ENCODE measurements at regions of chr4 and their contacts with region 1.

Region 1: GRCh38 chr4:88217920-88218319 is 59.5 kb upstream of the ABCG2 start:
- DNase-seq: no peak
- ATAC-seq: no peak
- H3K4me3 ChIP-seq: no peak overlapping the region
- H3K27ac ChIP-seq: no peak overlapping the region
- H3K4me1 ChIP-seq: peaks cover 0 to 3% (median 0%) of the 10 kb centered on the region in 9 donors
- H3K27me3 ChIP-seq: no peaks in the 10 kb centered on the region
- CTCF ChIP-seq: no peak

Region 2: GRCh38 chr4:88104902-88105610 is 112.9 kb before region 1 on chr4:
- intact Hi-C with region 1: no loop called
- DNase-seq: no peak
- ATAC-seq: no peak
- H3K4me3 ChIP-seq: no peak overlapping the region
- H3K27ac ChIP-seq: no peak overlapping the region
- H3K4me1 ChIP-seq: peaks cover 0 to 17% (median 8%) of the 10 kb centered on the region in 9 donors
- H3K27me3 ChIP-seq: no peaks in the 10 kb centered on the region
- CTCF ChIP-seq: no peak

Region 3: GRCh38 chr4:88240297-88240714 is 22.4 kb after region 1 on chr4:
- intact Hi-C with region 1: no loop called
- DNase-seq: peak; percentile 41 to 76
- ATAC-seq: peak; percentile 88 to 97 (median 93)
- H3K4me3 ChIP-seq: no peak overlapping the region
- H3K27ac ChIP-seq: peak overlapping the region in 6 of 10 donors; percentile 7 to 60 (median 41)
- H3K4me1 ChIP-seq: peaks cover 0 to 22% (median 5%) of the 10 kb centered on the region in 9 donors
- H3K27me3 ChIP-seq: no peaks in the 10 kb centered on the region
- CTCF ChIP-seq: peak in 3 of 9 donors; percentile 8 to 35 (median 18)

Region 4: DNA sequence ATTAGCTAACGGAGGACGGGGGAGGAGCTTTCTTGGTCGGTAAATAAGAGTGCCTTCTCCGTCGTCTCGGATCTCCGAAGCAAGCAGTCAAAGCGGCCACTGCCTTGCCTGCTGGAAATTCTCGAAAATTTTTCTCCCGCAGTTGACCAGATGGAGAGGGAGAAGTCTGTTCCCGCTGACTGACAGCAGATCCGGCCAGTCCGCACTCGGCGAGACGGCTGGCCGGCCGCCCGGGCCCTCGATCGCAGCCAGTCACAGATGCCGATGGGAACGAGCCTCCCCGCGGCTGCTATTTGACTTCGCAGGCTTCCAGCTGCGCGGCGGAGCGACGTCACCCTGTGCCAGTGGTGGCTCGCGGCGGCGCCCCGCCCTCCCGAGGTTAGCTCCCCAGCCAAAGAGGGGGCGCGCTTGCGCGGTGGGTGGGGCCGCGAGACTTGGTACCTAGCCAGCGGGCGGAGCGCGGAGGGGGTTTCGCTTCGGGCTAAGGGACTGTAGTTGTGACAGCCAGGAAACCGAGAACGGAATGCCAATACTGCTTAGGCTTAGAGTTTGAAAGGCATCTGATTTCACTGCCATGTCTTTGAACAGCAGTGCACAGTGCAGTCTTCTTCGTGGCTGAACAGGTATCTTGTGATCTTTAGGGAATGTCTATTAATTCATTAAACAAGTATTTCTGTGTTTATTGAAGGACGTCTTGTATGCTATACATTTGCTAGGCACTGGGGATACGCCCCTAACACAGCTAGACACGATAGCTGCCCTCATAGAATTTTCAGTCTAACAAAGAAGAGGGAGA is 66.7 kb after region 1 on chr4 and contains the start of gene PPM1K:
- intact Hi-C with region 1: no loop called
- DNase-seq: peak; percentile 99 to 100
- ATAC-seq: peak; percentile 96 to 98 (median 98)
- H3K4me3 ChIP-seq: peak within 1 kb of the TSS; percentile 50 to 91 (median 80)
- H3K27ac ChIP-seq: peak within 1 kb of the TSS; percentile 92 to 98 (median 96)
- H3K4me1 ChIP-seq: peaks cover 0 to 31% (median 20%) of the 10 kb centered on the region in 9 donors
- H3K27me3 ChIP-seq: no peaks in the 10 kb centered on the region
- CTCF ChIP-seq: peak in 6 of 9 donors; percentile 13 to 48 (median 24)
- total RNA-seq, gene PPM1K: 160 to 357 (median 282) TPM

Region 5: DNA sequence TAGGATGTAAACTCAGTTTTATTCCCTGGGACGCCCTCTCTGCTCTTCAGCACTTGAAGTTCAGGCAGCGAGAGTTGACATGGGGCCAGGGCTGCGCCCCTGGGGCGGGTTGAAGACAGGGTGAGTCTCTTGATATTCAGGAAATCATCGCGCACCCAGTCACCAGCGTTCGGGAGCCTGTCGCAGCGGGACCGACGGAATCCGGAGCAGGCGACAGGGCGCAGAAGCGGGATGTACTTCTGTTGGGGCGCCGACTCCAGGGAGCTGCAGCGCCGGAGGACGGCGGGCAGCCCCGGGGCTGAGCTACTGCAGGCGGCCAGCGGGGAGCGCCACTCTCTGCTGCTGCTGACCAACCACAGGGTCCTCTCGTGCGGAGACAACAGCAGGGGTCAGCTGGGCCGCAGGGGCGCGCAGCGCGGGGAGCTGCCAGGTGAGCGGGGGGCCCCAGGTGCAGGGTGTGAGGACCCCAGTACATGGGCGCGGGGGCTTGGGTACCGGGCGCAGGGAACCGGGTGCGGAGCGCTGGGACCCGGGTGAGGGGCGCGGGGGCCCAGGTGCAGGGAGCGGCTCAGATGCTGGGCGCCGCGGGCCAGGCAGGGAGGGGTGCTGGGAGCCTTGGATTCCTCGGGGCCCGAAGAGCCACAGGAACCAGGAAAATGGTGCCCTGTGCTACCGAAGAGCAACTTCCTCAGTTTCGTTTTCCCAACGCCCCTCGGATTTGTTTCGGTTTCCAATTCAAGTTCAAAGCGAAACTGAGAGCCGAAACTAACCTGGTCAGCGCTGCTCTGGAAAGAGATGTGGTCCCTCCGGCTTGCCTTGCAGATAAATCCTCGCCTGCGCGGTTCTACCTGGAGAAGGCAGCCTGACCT is 161.0 kb after region 1 on chr4 and contains the start of gene HERC6:
- intact Hi-C with region 1: loop called in 3 of 10 experiments (anchors 2 to 5 kb)
- DNase-seq: peak; percentile 74 to 85
- ATAC-seq: peak; percentile 94 to 98 (median 96)
- H3K4me3 ChIP-seq: peak within 1 kb of the TSS; percentile 91 to 100 (median 96)
- H3K27ac ChIP-seq: peak within 1 kb of the TSS; percentile 95 to 100 (median 98)
- H3K4me1 ChIP-seq: peaks cover 0 to 14% (median 0%) of the 10 kb centered on the region in 9 donors
- H3K27me3 ChIP-seq: no peaks in the 10 kb centered on the region
- CTCF ChIP-seq: peak; percentile 50 to 89 (median 80)
- total RNA-seq, gene HERC6: 8.9 to 20.0 (median 15.8) TPM

Measured in heart right ventricle (tissue), 16 donors.